Common myeloid progenitor, CD34-positive (primary cell): ENCODE measurements at regions of chr1 and their contacts with region 1.

Region 1: DNA sequence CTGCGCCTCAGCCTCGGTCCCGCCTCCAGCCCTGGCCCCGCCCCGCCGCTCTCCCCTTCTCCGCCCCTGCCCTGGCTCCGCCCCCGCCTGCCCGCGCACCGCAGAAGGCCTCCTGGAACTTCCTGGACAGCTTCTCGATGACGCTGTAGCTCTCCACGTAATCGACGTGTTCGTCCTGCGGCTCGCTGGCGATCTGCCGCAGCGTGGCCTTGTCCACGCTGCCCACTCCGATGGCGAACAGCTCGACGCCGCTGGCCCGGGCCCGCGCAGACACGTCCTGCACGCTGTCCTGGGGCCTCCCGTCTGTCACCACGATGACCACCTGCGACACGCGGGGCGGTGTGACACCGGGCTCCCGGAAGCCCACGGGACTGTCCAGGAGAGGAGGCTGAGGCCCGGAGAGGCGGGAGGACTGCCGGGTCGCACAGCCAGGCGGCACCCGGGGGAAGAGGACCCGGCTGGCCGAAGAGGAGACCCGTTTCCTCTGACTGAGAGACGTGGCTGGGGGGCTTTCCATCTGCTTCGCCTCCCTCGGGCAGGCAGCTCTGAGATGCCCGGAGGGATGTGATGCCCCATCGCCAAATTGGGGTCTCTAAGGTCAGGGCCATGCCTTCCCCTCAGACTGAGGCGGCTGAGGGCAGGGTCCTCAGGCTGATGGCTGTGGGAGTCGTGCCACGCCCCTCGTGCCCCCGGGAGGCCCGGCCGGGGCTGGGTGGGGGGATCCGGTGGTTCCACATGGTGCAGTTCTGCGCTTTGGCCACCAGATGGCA is 4.6 kb downstream of the MATN1 start:
- DNase-seq: peak; percentile 94 to 96 (median 96)
- H3K4me3 ChIP-seq: peak overlapping the region; percentile 51 to 80 (median 67)
- H3K27ac ChIP-seq: peak overlapping the region; percentile 85 to 93
- H3K4me1 ChIP-seq: peaks cover 0 to 28% (median 15%) of the 10 kb centered on the region in 4 experiments
- H3K27me3 ChIP-seq: peaks cover 0 to 2% (median 0%) of the 10 kb centered on the region in 5 experiments

Region 2: GRCh38 chr1:30637183-30637980 is 81.4 kb before region 1 on chr1:
- CTCF ChIA-PET with region 1: no interaction called
- POLR2A ChIA-PET with region 1: no interaction called
- DNase-seq: no peak
- H3K4me3 ChIP-seq: no peak overlapping the region
- H3K27ac ChIP-seq: no peak overlapping the region
- H3K4me1 ChIP-seq: no peaks in the 10 kb centered on the region
- H3K27me3 ChIP-seq: peaks cover 0 to 23% (median 0%) of the 10 kb centered on the region in 5 experiments

Region 3: DNA sequence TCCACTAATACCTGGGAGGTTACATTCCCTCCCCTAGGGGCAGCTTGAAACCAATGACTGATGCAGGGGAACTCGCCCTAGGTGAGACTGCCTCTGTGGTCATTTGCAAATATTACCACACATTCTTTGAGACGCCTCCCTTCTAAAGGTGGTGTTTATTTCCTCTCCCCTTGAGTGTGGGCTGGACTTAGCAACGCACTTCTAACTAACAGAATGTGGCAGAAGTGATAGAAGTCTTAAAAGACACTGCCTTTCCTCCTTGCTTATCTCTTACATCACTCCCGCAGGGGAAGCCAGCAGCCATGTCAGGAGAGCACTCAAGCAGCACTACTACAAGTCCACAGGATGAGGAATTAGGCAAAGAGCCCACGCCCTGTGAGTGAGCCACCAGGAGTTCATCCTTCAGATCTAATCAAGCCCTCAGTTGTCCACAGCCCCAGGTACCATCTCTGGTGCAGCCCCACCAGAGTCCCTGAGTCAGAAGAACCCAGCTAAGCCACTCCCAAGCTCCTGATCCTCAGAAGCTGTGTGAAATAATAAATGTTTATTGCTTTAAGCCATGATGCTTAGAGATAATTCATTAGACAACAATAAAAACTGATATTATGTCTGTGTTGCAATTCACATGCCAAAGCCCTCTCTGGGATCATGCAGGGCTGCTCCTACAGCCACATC is 19.4 kb after region 1 on chr1:
- CTCF ChIA-PET with region 1: interaction called, 82 read pairs
- POLR2A ChIA-PET with region 1: interaction called, 3 read pairs
- DNase-seq: no peak
- H3K4me3 ChIP-seq: no peak overlapping the region
- H3K27ac ChIP-seq: no peak overlapping the region
- H3K4me1 ChIP-seq: peaks cover 12 to 47% (median 43%) of the 10 kb centered on the region in 4 experiments
- H3K27me3 ChIP-seq: no peaks in the 10 kb centered on the region

Region 4: DNA sequence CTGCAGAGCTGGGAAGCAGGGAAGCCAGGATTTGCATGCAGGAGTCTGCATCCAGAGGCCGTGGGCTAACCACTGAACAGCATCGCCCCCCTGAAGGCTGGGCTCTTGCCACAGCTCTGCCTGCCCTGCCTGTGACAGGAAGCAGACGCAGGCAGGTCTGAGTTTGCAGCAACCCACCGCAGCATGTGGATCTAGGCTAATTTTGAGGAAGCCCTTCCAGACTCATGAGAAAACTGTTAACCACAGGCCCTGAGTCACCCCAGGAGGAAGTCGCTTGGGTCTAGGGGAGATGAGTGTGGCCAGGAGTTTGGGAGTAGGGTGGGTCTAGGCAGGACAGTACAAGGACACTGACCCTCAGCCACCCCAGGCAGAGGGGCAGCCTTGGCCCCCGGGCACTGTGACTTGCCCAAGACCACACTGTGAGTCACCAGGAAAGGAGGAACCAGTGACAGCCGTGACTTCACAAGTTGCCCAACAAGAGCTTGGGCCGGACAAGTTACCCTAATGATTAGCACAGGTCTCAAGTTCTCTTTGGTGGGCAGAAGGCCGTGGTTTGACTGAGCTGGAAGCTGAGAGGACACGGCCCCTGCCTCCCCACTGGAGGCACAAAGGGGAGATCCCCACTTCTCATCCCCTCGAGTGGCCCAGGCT is 37.8 kb after region 1 on chr1:
- CTCF ChIA-PET with region 1: interaction called, 43 read pairs
- POLR2A ChIA-PET with region 1: interaction called, 4 read pairs
- DNase-seq: peak; percentile 97 to 100 (median 99)
- H3K4me3 ChIP-seq: peak overlapping the region; percentile 51 to 96 (median 93)
- H3K27ac ChIP-seq: peak overlapping the region; percentile 97 to 99
- H3K4me1 ChIP-seq: peaks cover 51 to 98% (median 91%) of the 10 kb centered on the region in 4 experiments
- H3K27me3 ChIP-seq: no peaks in the 10 kb centered on the region

Region 5: GRCh38 chr1:30768830-30769718 is 50.3 kb after region 1 on chr1:
- CTCF ChIA-PET with region 1: interaction called, 356 read pairs
- POLR2A ChIA-PET with region 1: no interaction called
- DNase-seq: peak; percentile 94 to 99 (median 99)
- H3K4me3 ChIP-seq: peak overlapping the region in 3 of 7 experiments; percentile 2 to 54 (median 13)
- H3K27ac ChIP-seq: peak overlapping the region in 1 of 2 experiments; percentile 83
- H3K4me1 ChIP-seq: peaks cover 9 to 35% (median 31%) of the 10 kb centered on the region in 4 experiments
- H3K27me3 ChIP-seq: no peaks in the 10 kb centered on the region

Region 6: DNA sequence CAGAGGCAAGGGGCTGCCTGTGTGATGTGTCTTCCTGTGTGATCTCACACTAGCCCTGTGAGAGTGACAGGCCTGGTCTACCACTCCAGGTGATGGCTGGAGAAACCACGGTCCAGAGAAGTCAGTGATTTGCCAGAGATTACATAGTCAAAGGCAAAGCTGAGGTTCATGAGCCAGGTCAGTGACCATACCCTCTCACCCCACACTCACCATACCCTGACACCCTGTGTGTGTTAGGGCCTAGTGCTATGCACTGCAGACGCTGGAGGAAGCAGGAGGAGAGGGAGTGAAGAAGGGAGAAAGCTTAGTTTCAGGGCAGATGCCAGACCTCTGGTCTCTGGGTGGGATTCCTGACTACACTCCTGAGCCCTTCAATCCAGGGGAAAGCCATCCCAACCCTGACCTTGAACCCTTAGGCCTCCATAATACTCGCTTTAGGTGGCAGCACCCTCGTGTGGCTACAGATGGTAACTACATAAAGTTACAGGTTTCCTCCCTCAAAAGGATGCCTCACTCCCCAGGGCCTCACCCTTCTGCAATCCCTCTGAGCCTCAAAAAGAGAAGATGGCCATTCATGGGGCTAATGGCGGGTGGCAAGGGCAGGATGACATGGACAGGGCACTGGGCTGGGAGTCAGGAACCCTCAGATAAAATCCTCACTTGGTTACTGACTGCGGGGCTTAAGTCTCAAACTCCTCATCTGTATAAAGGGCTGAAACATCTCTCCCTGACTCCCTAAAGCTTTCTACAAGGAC is 210.5 kb after region 1 on chr1:
- CTCF ChIA-PET with region 1: interaction called, 26 read pairs
- POLR2A ChIA-PET with region 1: no interaction called
- DNase-seq: peak; percentile 39 to 70 (median 59)
- H3K4me3 ChIP-seq: no peak overlapping the region
- H3K27ac ChIP-seq: no peak overlapping the region
- H3K4me1 ChIP-seq: no peaks in the 10 kb centered on the region
- H3K27me3 ChIP-seq: no peaks in the 10 kb centered on the region